Activated T-helper 1 cell treated with anti-CD3 and anti-CD28 coated beads, Interleukin-12 subunit alpha, Interleukin-12 subunit beta, Interleukin-2, Interleukin-4 antibody, amounts not matched to agents 30 ng/mL and 10 ng/mL and 1 ng/mL, durations not matched to agents 14 hours and 24 hours and 36 hours (primary cell): ENCODE measurements at regions of chr2 and their contacts with region 1.

Region 1: DNA sequence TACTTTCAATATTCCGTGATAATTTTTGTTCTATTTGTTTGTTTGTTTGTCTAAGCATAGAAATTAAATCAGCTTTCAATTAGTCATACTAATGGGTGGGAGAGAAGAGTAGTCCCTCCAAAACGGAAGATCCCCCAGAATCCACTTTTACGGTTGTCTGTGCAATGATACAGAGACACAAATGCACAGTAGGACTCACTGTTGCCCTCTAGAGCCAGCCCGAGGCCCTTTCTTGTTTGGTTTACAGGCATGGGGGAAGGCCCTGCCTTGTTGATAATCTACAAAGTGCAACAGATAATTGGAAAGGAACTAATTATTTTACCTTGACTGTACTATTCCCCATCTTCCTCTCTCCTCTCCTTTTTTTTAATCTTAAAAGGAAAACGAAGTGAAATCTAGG is 121.1 kb downstream of the ACOXL start:
- DNase-seq: peak; percentile 44
- H3K4me3 Mint-ChIP-seq: peak overlapping the region; percentile 35
- H3K27ac Mint-ChIP-seq: no peak overlapping the region
- H3K4me1 Mint-ChIP-seq: peaks cover 88% of the 10 kb centered on the region
- H3K27me3 Mint-ChIP-seq: peaks cover 23% of the 10 kb centered on the region

Region 2: DNA sequence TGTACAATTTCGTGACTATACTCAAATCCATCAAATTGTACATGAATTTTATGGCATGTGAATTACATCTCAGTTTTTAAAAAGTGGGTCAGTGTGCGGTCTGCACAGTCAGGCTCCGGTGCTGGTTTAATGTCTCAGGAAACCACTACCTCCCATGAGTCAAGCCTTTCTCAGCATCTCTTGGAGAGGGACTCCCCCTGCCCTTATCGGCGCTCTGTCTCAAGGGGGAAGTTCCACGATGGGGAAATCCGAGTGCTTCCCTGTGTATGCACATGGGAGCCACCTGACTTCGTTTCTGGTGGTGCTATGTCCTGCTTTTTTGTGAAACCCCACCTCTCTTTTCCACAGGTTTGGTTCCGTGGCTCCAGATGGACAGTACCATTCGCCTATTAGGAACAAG is 48.6 kb before region 1 on chr2:
- intact Hi-C with region 1: loop called (anchors 1 kb)
- DNase-seq: peak; percentile 66
- H3K4me3 Mint-ChIP-seq: peak overlapping the region; percentile 45
- H3K27ac Mint-ChIP-seq: peak overlapping the region; percentile 46
- H3K4me1 Mint-ChIP-seq: peaks cover 25% of the 10 kb centered on the region
- H3K27me3 Mint-ChIP-seq: peaks cover 42% of the 10 kb centered on the region

Region 3: DNA sequence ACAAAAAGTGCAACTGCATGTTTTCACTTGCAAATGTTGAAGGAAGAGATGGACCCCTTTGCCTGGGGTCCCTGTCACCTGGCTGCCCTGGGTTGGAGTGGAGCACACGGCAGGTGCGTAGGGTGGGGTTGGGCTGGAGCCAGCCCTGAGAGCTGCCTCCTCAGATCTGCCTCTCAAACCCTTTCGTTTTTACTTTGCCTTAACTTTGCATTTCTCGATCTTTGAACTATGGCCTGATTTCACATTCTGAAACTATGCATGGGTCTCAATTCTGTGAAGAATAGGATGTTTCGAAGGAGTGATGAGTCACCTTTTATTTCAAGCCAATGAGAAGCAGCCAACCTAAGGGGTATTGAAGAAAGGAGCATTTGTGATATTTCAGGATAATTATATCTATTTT is 11.7 kb after region 1 on chr2:
- intact Hi-C with region 1: loop called (anchors 1 kb)
- DNase-seq: no peak
- H3K4me3 Mint-ChIP-seq: peak overlapping the region; percentile 48
- H3K27ac Mint-ChIP-seq: peak overlapping the region; percentile 32
- H3K4me1 Mint-ChIP-seq: peaks cover 76% of the 10 kb centered on the region
- H3K27me3 Mint-ChIP-seq: peaks cover 19% of the 10 kb centered on the region

Region 4: GRCh38 chr2:110910423-110910822 is 56.9 kb after region 1 on chr2:
- intact Hi-C with region 1: loop called (anchors 1 kb)
- DNase-seq: no peak
- H3K4me3 Mint-ChIP-seq: no peak overlapping the region
- H3K27ac Mint-ChIP-seq: no peak overlapping the region
- H3K4me1 Mint-ChIP-seq: no peaks in the 10 kb centered on the region
- H3K27me3 Mint-ChIP-seq: peaks cover 38% of the 10 kb centered on the region